Activated T-helper 1 cell treated with anti-CD3 and anti-CD28 coated beads, Interleukin-12 subunit alpha, Interleukin-12 subunit beta, Interleukin-2, Interleukin-4 antibody, amounts not matched to agents 30 ng/mL and 10 ng/mL and 1 ng/mL, durations not matched to agents 14 hours and 24 hours and 36 hours (primary cell): ENCODE measurements at regions of chr10 and their contacts with region 1.

Region 1: DNA sequence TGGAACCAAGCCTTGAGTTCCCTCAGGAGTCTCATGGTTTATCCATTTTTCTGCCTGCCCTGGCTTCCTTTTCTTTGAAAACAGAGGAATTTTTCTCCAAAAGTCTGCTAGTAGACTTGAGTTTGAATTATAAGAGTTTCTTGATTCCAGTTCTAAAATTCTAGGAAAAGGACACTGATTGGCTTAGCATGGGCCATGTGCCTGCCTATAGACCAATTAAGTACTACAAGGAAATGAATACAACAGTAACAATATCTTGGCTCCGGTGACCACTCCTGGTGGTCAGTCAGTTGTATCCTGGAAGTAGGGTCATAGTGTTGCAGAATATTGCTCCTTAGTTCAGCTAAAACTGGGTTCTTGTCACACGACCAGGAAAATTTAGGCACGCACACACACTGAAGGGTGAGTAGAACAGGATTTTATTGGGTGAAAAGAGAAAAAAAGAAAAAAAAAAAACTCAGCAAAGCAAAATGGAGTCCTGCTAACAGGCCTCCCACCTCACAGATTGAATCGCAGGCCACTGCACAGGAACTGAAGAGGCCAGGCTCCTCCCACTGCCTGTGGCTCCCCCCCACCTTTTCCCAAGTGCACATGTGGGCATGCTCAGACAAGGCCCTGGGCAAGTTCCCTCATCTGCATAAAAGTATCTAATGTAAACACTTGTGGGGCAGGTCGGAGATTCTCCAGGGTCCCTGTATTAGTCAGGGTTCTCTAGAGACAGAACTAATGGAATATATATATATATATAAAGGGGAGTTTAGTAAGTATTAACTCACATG is 155.1 kb downstream of the LYZL1 start:
- DNase-seq: no peak
- H3K4me3 Mint-ChIP-seq: no peak overlapping the region
- H3K27ac Mint-ChIP-seq: no peak overlapping the region
- H3K4me1 Mint-ChIP-seq: peaks cover 29% of the 10 kb centered on the region
- H3K27me3 Mint-ChIP-seq: peaks cover 2% of the 10 kb centered on the region

Region 2: GRCh38 chr10:29328983-29329382 is 115.0 kb before region 1 on chr10:
- intact Hi-C with region 1: no loop called
- DNase-seq: no peak
- H3K4me3 Mint-ChIP-seq: no peak overlapping the region
- H3K27ac Mint-ChIP-seq: no peak overlapping the region
- H3K4me1 Mint-ChIP-seq: no peaks in the 10 kb centered on the region
- H3K27me3 Mint-ChIP-seq: peaks cover 3% of the 10 kb centered on the region

Region 3: GRCh38 chr10:29377333-29377961 is 66.5 kb before region 1 on chr10:
- intact Hi-C with region 1: loop called (anchors 2 kb)
- DNase-seq: no peak
- H3K4me3 Mint-ChIP-seq: no peak overlapping the region
- H3K27ac Mint-ChIP-seq: no peak overlapping the region
- H3K4me1 Mint-ChIP-seq: no peaks in the 10 kb centered on the region
- H3K27me3 Mint-ChIP-seq: no peaks in the 10 kb centered on the region

Region 4: DNA sequence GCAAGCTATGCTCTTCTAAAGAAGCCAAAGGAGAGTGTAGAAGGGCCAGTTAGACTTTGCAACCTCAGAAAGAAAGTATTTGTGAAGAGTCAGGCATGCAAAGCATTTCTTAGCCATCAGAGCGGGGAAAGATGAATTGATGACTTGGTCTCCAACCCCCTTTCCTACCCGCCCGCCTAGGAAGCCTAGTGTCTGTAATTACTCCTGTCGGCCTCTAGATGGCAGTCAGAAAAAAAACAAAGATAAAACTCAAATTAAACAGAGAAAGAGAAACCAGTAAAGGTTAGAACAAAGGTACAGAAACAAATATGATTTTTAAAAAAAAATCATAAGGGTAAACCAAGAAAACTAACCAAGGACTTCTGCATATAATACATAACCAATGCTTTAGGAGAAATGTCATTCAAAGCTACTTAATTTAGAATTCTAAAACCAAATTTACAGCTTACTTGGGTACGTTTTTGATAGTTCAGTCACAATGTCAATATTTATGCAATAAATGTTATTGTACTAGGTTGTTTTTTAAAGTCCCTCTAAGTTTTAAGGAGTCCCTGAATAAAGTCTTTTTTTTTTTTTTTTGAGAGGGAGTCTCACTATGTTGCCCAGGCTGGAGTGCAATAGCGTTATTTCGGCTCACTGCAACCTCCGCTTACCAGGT is 57.5 kb before region 1 on chr10:
- intact Hi-C with region 1: loop called (anchors 1 kb)
- DNase-seq: no peak
- H3K4me3 Mint-ChIP-seq: no peak overlapping the region
- H3K27ac Mint-ChIP-seq: no peak overlapping the region
- H3K4me1 Mint-ChIP-seq: peaks cover 5% of the 10 kb centered on the region
- H3K27me3 Mint-ChIP-seq: peaks cover 11% of the 10 kb centered on the region

Region 5: GRCh38 chr10:29409241-29410057 is 34.5 kb before region 1 on chr10:
- intact Hi-C with region 1: loop called (anchors 5 kb)
- DNase-seq: peak; percentile 28
- H3K4me3 Mint-ChIP-seq: peak overlapping the region; percentile 98
- H3K27ac Mint-ChIP-seq: peak overlapping the region; percentile 90
- H3K4me1 Mint-ChIP-seq: peaks cover 34% of the 10 kb centered on the region
- H3K27me3 Mint-ChIP-seq: no peaks in the 10 kb centered on the region

Region 6: DNA sequence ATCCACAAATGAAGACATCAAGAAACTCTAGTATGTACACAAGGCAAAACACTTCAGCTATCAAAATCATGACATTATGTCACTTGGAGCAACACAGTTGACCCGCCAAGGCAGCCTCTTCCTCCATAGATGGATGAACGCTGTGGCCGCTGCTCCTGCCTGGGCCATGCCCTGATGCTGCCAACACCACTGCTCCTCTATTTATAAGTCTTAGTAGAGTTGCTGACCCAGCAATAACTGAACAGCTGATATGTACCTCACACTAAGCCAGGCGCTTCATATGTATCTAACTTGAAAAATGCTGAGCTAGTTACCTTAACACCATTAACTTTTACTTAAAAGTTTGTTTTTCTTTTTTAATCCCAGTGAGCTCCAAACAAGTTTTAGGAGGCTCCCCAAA is 23.2 kb before region 1 on chr10:
- intact Hi-C with region 1: no loop called
- DNase-seq: no peak
- H3K4me3 Mint-ChIP-seq: no peak overlapping the region
- H3K27ac Mint-ChIP-seq: no peak overlapping the region
- H3K4me1 Mint-ChIP-seq: no peaks in the 10 kb centered on the region
- H3K27me3 Mint-ChIP-seq: no peaks in the 10 kb centered on the region

Region 7: GRCh38 chr10:29496341-29497162 is 52.6 kb after region 1 on chr10:
- intact Hi-C with region 1: loop called (anchors 1 kb)
- DNase-seq: peak; percentile 34
- H3K4me3 Mint-ChIP-seq: no peak overlapping the region
- H3K27ac Mint-ChIP-seq: no peak overlapping the region
- H3K4me1 Mint-ChIP-seq: no peaks in the 10 kb centered on the region
- H3K27me3 Mint-ChIP-seq: no peaks in the 10 kb centered on the region

Region 8: DNA sequence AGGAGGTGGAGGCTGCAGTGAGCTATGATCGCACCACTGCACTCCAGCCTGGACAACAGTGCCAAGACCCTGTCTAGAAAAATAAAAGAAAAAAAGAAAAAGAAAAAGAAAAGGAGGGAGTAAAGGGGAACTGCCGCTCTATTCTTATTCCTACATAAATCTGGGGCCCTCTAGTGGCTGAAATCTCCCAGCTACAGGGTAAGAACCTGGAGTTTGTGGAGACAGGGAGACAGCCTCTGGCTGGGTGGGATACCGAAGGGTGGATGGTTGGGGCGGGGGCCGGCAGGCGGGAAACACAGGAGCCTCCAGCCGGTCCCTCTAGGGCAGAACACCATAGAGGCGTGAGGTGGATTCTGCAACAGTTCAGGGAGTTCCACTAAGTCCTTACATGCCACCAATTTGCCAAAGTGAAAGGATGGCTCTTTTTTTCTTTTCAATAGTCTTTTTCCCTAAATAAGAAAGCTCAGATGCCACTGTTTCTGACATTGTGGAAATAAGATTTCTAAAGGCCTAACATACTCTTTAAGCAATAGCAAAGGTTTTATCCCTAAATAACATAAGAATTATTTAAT is 73.5 kb after region 1 on chr10:
- intact Hi-C with region 1: loop called (anchors 1 kb)
- DNase-seq: no peak
- H3K4me3 Mint-ChIP-seq: no peak overlapping the region
- H3K27ac Mint-ChIP-seq: no peak overlapping the region
- H3K4me1 Mint-ChIP-seq: peaks cover under 1% of the 10 kb centered on the region
- H3K27me3 Mint-ChIP-seq: no peaks in the 10 kb centered on the region

Region 9: GRCh38 chr10:29590915-29591650 is 147.1 kb after region 1 on chr10:
- intact Hi-C with region 1: loop called (anchors 1 kb)
- DNase-seq: no peak
- H3K4me3 Mint-ChIP-seq: no peak overlapping the region
- H3K27ac Mint-ChIP-seq: no peak overlapping the region
- H3K4me1 Mint-ChIP-seq: peaks cover 9% of the 10 kb centered on the region
- H3K27me3 Mint-ChIP-seq: peaks cover 5% of the 10 kb centered on the region